ENCODE measurements at regions of chr6 and their contacts with region 1.

Region 1: DNA sequence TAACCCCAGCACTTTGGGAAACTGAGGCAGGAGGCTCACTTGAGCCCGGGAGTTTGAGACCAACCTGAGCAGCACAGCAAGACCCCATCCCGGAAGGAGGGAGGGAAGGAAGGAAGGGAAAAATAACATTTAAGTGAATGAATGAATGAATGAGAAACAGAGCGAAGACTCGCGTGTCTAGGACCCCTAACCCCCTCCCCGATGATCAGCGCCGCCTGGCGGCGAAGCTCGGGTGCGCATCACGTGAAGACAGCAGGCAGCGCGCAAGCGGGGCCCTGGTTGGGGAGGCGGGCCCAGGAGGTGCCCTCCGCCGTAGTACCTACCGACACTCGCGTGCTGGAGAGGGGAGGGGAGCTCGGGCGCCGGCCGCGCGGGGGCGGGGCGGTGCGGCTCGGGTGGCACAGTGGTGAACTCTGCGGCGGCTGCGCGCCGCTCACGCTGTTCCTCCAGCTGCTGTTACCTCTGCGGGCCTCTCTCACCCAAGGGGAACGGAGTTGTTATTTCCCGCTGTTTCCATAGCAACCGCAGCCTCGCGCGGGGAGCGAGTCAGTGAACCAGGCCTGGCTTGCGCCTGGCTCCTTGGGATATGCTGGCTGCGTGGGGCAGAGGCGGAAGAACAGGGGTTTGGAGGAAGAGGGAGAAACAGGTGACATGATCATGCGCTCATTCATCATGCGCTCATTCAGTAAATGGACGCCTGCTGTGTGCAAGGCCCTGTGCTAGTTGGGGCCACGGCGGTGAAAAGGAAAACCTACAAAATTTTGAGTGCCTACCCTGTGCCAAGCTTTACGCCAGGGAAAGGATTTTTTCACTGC is 2.0 kb upstream of the DCDC2 start:
- DNase-seq: peak; percentile 69 to 99
- H3K4me3 ChIP-seq: peak overlapping the region; percentile 60 to 70 (median 67)
- H3K27ac ChIP-seq: 0 out of 2 replicates have a peak overlapping the region, but pooled peaks have one; percentile 13
- H3K4me1 ChIP-seq: peaks cover 0 to 3% (median 1%) of the 10 kb centered on the region in 4 experiments; a peak in 2 of 7 replicates
- H3K27me3 ChIP-seq: no peaks in the 10 kb centered on the region
- CTCF ChIP-seq: peak; percentile 83 to 93 (median 88)
- EP300 ChIP-seq: peak in 1 of 2 experiments; percentile 14; a peak in 1 of 3 replicates
- POLR2A ChIP-seq: no peak
- RAD21 ChIP-seq: peak; percentile 56 to 74

Region 2: DNA sequence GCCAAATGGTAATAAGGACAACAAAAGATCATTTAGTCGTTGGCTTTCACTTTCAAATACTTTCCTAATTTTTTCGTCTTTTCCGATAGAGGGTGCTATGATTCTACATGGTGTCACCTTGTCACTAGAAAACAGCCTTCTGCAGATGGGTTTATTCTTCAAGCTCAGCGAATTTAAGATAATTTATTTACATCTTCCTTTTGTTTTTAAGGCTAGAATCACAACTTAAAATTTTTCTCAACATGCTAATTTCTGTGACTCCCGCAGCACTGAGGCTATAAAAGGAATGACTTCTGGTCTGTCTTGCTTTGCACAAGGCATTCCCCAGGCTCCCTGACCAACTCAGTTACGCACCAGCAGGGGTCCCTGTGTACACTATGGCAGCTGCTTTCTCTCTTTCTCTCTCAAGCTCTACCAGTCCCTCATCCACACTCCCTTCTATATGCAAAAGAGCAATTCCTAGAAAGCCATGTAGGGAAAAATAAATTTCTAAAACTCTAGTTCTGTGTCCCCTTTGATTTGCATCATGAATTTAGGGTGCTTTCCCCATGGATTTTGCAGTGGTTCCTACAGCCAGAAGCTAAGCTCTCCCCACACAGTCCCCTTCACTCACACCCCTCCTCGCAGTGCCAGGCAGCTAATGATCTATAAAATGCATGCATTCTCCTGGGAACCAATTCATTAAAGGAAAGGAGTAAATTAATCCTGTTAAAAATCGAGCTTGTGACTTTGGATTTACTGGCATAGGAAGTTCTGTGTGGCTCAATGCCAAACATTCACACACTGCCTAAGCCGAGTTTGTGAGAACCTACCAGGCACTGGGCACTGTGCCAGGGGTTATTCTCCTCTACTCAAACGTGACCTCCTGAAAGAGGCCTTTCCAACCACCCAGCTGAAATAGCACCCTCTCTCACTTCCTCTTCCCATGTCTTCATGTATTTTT is 76.5 kb before region 1 on chr6:
- CTCF ChIA-PET with region 1: interaction called, 21 read pairs
- POLR2A ChIA-PET with region 1: interaction called, 3 read pairs
- DNase-seq: peak in 1 of 2 experiments; percentile 34
- H3K4me3 ChIP-seq: peak overlapping the region in 1 of 4 experiments; percentile 49; a peak in 2 of 8 replicates
- H3K27ac ChIP-seq: no peak overlapping the region
- H3K4me1 ChIP-seq: peaks cover 0 to 7% (median 0%) of the 10 kb centered on the region in 4 experiments; a peak in 1 of 7 replicates
- H3K27me3 ChIP-seq: no peaks in the 10 kb centered on the region
- CTCF ChIP-seq: peak; percentile 59 to 64 (median 62)
- EP300 ChIP-seq: no peak
- POLR2A ChIP-seq: no peak
- RAD21 ChIP-seq: peak; percentile 47

Region 3: DNA sequence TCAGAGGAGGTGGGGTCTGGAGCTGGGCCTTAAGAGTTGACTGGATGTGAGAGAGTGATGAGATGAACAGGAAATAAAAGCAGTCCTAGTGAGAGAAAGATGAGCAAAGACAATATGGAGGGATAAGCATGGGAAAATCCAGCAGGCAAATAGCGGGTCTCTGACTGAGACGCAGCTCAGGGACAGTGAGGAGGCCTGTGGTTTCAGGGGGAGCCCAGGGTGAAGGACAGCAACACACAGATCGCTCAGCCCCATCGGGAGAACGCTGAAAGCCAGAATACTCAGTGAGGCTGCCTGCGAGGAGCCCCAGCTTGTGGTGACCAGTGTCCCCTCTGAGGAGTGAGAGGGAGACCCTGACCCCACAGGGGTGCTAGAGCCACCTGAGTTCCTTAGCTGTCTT is 14.8 kb after region 1 on chr6:
- CTCF ChIA-PET with region 1: interaction called, 11 read pairs
- POLR2A ChIA-PET with region 1: interaction called, 3 read pairs
- DNase-seq: no peak
- H3K4me3 ChIP-seq: no peak overlapping the region
- H3K27ac ChIP-seq: no peak overlapping the region
- H3K4me1 ChIP-seq: no peaks in the 10 kb centered on the region
- H3K27me3 ChIP-seq: no peaks in the 10 kb centered on the region
- CTCF ChIP-seq: no peak
- EP300 ChIP-seq: no peak
- POLR2A ChIP-seq: no peak
- RAD21 ChIP-seq: no peak